ENCODE measurements at regions of chr11 and their contacts with region 1.

Region 1: DNA sequence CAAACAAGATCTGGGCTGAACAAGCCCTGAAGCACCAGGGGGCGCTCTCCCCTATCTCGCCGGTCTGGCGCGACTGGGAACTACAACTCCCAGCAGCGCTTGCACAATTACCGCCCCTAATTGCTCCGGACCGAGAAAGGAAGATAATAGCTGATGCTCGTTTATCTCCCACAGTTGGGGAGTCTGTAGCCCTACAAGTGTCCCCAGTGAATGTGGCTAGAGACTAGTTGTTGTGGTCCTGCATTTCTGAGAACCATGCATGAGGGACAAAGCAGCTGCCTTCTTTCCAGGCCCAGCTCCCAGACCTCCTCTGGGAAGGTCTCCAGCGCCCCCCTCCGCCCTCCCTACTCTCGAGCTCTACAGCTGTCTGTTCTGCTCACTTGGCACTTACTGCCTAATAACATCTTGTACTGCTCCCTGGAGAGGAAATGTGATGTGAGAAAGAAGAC is 34.4 kb downstream of the NRXN2 start:
- DNase-seq: peak; percentile 94
- H3K4me3 ChIP-seq: peak overlapping the region; percentile 18 to 46 (median 37)
- H3K27ac ChIP-seq: peak overlapping the region; percentile 48 to 77 (median 72)
- H3K4me1 ChIP-seq: peaks cover 0 to 24% (median 20%) of the 10 kb centered on the region in 4 donors
- H3K27me3 ChIP-seq: peaks cover 0 to 8% (median 0%) of the 10 kb centered on the region in 3 donors
- CTCF ChIP-seq: peak; percentile 91 to 97 (median 96)
- EP300 ChIP-seq: no peak
- POLR2A ChIP-seq: no peak

Region 2: GRCh38 chr11:64240394-64241174 is 448.0 kb before region 1 on chr11 and contains the start of gene FKBP2:
- intact Hi-C with region 1: no loop called
- DNase-seq: peak; percentile 99
- H3K4me3 ChIP-seq: peak within 1 kb of the TSS; percentile 85 to 97 (median 94)
- H3K27ac ChIP-seq: peak within 1 kb of the TSS; percentile 93 to 99 (median 98)
- H3K4me1 ChIP-seq: peaks cover 0 to 53% (median 39%) of the 10 kb centered on the region in 4 donors
- H3K27me3 ChIP-seq: no peaks in the 10 kb centered on the region
- CTCF ChIP-seq: no peak
- EP300 ChIP-seq: peak in 2 of 4 donors; percentile 33 to 79
- POLR2A ChIP-seq: peak; percentile 78 to 87
- total RNA-seq, gene FKBP2: 49.2 to 70.5 (median 51.3) TPM

Region 3: DNA sequence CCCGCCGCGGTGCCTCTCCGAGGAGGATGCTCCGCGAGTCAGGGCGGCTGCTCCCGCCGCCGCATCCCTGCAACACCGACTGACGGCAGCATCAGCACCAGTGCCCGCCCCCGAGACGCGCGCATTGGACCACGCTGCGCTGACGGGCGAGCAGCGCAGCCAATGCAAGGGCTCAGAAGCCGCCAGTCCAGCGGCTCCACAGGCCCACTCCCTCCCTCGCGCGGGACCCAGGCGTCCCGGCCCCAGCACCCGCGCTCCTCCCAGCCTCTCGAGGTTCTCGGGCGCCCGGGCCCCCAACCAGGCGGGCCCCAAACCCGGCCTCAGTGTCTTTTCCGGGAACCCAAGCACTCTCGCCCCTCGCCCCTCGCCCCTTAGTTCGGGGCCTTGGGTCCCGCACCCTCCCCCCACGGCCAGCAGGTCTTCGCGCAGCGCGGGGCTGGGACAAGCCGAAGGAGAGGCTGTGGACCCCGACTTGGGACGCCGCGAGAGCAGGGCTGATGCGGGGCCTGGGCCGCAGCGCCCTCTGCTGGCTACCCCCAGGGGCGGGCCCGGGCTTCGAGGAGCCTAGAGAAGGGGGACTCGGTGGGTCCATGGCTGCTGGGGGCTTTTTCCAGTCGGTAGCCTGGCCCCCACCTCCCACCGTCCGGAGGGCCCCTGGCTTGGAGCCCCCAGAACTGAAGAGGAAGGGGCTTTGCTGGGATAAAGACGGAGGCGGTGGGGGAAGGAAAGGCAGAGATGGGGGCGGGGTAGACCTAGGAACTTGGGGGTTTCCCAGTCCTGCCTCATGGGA is 34.8 kb after region 1 on chr11 and contains the start of gene NRXN2:
- intact Hi-C with region 1: loop called (anchors 1 kb)
- DNase-seq: peak; percentile 91
- H3K4me3 ChIP-seq: peak within 1 kb of the TSS; percentile 55 to 70 (median 62)
- H3K27ac ChIP-seq: peak within 1 kb of the TSS; percentile 70 to 80 (median 74)
- H3K4me1 ChIP-seq: peaks cover 0 to 7% (median 3%) of the 10 kb centered on the region in 4 donors
- H3K27me3 ChIP-seq: peaks cover 3 to 45% (median 36%) of the 10 kb centered on the region in 3 donors
- CTCF ChIP-seq: peak; percentile 95 to 99 (median 96)
- EP300 ChIP-seq: no peak
- POLR2A ChIP-seq: no peak
- total RNA-seq, gene NRXN2: 6.8 to 20.5 (median 13.7) TPM